Ascending aorta (tissue), 2 donors: ENCODE measurements at regions of chr13 and their contacts with region 1.

Region 1: GRCh38 chr13:30865123-30866049 is 40.7 kb upstream of the MEDAG start:
- DNase-seq: peak in 1 of 2 donors; percentile 90
- H3K4me3 ChIP-seq: peak overlapping the region in 1 of 2 donors; percentile 4
- H3K27ac ChIP-seq: peak overlapping the region; percentile 87 to 97
- H3K4me1 ChIP-seq: peaks cover 7 to 46% of the 10 kb centered on the region in 2 donors
- H3K27me3 ChIP-seq: no peaks in the 10 kb centered on the region
- CTCF ChIP-seq: peak; percentile 93 to 94 (median 94)

Region 2: DNA sequence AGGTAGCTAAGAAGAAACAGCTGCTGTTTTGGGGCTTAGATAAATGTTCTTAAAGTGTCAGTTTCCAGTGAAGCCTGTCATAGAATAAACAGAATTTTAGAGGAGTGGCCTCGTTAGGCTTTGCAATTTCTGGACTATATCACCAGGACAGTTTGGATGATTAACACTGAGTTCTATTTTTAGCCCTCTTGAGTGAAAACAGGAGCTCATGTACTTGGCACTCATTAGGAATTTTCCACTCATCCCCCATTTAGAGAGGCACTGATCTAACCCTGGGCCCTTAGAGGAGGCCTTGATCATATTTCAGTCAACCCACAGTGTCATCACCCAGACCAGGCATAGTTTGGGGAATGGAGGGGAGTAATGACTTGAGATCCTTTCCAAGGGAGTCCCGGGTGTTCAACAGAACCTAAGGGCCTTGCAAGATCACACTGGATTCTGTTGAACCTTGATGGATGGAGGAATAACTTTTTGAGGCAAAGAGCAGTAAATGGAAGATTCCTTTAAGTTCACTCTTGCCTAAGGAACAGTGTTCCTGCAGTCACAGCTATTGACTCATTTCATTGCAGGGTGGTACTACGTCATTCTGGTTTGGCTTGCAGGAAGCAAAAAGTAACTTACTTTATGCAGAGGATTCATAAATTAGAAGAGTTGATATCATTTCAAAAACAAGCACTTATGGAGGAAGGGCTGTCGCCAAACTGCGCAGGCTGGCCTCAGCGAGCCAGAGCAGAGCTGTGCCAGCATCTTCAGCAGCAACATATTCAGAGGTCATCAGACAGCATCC is 1430.1 kb before region 1 on chr13:
- intact Hi-C with region 1: loop called (anchors 10 kb)
- DNase-seq: peak in 1 of 2 donors; percentile 63
- H3K4me3 ChIP-seq: no peak overlapping the region
- H3K27ac ChIP-seq: peak overlapping the region; percentile 88 to 90
- H3K4me1 ChIP-seq: peaks cover 22 to 59% of the 10 kb centered on the region in 2 donors
- H3K27me3 ChIP-seq: no peaks in the 10 kb centered on the region
- CTCF ChIP-seq: no peak

Region 3: GRCh38 chr13:30617315-30618185 is 247.8 kb before region 1 on chr13 and contains the start of gene USPL1:
- intact Hi-C with region 1: loop called (anchors 5 kb)
- DNase-seq: peak; percentile 92 to 98
- H3K4me3 ChIP-seq: peak within 1 kb of the TSS; percentile 77 to 81
- H3K27ac ChIP-seq: peak within 1 kb of the TSS; percentile 99 to 100
- H3K4me1 ChIP-seq: peaks cover 0 to 21% of the 10 kb centered on the region in 2 donors
- H3K27me3 ChIP-seq: no peaks in the 10 kb centered on the region
- CTCF ChIP-seq: peak; percentile 19 to 63 (median 20)
- total RNA-seq, gene USPL1: 4.0 TPM

Region 4: GRCh38 chr13:30690282-30691188 is 174.9 kb before region 1 on chr13:
- intact Hi-C with region 1: no loop called
- DNase-seq: peak; percentile 56 to 77
- H3K4me3 ChIP-seq: peak overlapping the region; percentile 32 to 68
- H3K27ac ChIP-seq: peak overlapping the region; percentile 31 to 55
- H3K4me1 ChIP-seq: peaks cover 0 to 3% of the 10 kb centered on the region in 2 donors
- H3K27me3 ChIP-seq: no peaks in the 10 kb centered on the region
- CTCF ChIP-seq: no peak

Region 5: DNA sequence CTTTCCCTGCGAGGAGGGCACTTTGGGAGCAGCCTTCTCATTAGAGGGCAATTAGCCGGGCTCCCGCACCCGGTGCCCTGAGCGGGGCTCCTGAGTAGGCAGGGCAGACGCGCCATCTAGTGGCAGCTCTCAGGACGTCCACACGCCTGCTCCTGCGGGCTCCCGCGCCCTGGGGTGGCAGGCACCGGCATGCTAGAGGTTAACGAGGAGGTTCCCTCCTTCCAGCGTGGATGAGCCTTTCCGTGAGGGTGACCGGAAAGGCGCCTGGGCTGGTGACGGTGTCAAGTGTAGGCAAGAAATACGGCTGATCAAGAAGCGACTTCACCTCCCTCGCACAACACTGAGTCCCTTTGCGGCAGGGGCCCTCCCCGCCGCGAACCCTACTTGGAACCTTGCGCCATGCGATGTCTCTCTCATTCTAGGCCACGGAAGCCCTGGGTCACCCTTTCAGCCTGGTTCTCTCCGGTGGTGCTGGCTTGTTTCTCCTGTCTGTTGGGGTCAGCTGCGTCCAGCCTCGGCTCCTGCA is 62.4 kb before region 1 on chr13:
- intact Hi-C with region 1: loop called (anchors 1 kb)
- DNase-seq: peak; percentile 47 to 95
- H3K4me3 ChIP-seq: peak overlapping the region; percentile 43 to 54
- H3K27ac ChIP-seq: peak overlapping the region in 1 of 2 donors; percentile 60
- H3K4me1 ChIP-seq: peaks cover 0 to 13% of the 10 kb centered on the region in 2 donors
- H3K27me3 ChIP-seq: no peaks in the 10 kb centered on the region
- CTCF ChIP-seq: peak; percentile 89 to 97 (median 91)

Region 6: DNA sequence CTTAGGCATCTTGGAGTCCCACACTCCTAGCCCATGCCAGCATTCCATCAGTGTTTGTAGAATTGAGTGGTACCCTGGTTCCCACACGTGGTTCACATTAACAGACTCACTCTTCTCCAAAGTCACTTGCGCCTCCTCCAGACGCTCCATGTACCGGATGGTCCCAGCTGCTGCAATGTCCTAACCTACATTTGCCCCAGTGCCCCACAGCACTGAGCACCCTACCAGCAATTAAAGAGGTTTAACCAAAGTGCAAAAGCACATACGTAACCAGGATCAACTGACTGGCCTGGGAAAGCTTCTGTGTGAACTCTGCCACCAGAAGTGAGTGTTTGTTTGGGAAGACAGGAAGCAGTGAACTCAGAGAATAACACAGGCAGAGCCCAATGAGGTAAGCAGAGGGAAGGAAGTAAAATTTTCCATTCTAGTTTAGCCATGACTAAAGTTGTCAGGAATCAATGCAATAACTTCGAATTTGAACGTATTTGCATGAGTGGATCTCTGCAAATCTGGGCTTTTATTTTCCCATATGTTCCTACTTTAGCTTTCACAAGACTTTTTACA is 33.4 kb after region 1 on chr13:
- intact Hi-C with region 1: loop called (anchors 2 kb)
- DNase-seq: peak; percentile 54 to 94
- H3K4me3 ChIP-seq: peak overlapping the region in 1 of 2 donors; percentile 42
- H3K27ac ChIP-seq: peak overlapping the region; percentile 98 to 99
- H3K4me1 ChIP-seq: peaks cover 24 to 52% of the 10 kb centered on the region in 2 donors
- H3K27me3 ChIP-seq: no peaks in the 10 kb centered on the region
- CTCF ChIP-seq: peak in 1 of 3 experiments; percentile 12

Region 7: GRCh38 chr13:31044377-31045285 is 179.2 kb after region 1 on chr13:
- intact Hi-C with region 1: loop called (anchors 5 kb)
- DNase-seq: peak; percentile 28 to 88
- H3K4me3 ChIP-seq: no peak overlapping the region
- H3K27ac ChIP-seq: peak overlapping the region in 1 of 2 donors; percentile 23
- H3K4me1 ChIP-seq: peaks cover 0 to 2% of the 10 kb centered on the region in 2 donors
- H3K27me3 ChIP-seq: no peaks in the 10 kb centered on the region
- CTCF ChIP-seq: peak; percentile 68 to 96 (median 89)

Region 8: GRCh38 chr13:31199849-31200636 is 334.7 kb after region 1 on chr13 and contains the start of gene B3GLCT:
- intact Hi-C with region 1: no loop called
- DNase-seq: peak in 1 of 2 donors; percentile 88
- H3K4me3 ChIP-seq: peak within 1 kb of the TSS; percentile 88 to 97
- H3K27ac ChIP-seq: peak within 1 kb of the TSS; percentile 88 to 100
- H3K4me1 ChIP-seq: peaks cover 5 to 15% of the 10 kb centered on the region in 2 donors
- H3K27me3 ChIP-seq: no peaks in the 10 kb centered on the region
- CTCF ChIP-seq: peak; percentile 58 to 96 (median 77)
- total RNA-seq, gene B3GLCT: 8.8 TPM